Endothelial cell of umbilical vein (primary cell): ENCODE measurements at regions of chr4 and their contacts with region 1.

Region 1: GRCh38 chr4:11548597-11549082 is 119.9 kb upstream of the HS3ST1 start:
- DNase-seq: peak; percentile 73
- H3K4me3 ChIP-seq: no peak overlapping the region
- H3K27ac ChIP-seq: peak overlapping the region; percentile 87
- H3K4me1 ChIP-seq: peaks cover 58% of the 10 kb centered on the region
- H3K27me3 ChIP-seq: no peaks in the 10 kb centered on the region
- CTCF ChIP-seq: no peak
- POLR2A ChIP-seq: no peak

Region 2: GRCh38 chr4:10096201-10096977 is 1452.3 kb before region 1 on chr4:
- CTCF ChIA-PET with region 1: no interaction called
- POLR2A ChIA-PET with region 1: no interaction called
- dilution Hi-C with region 1: no loop called
- intact Hi-C with region 1: loop called (anchors 10 kb)
- DNase-seq: peak; percentile 71
- H3K4me3 ChIP-seq: no peak overlapping the region
- H3K27ac ChIP-seq: peak overlapping the region; percentile 79
- H3K4me1 ChIP-seq: peaks cover 82% of the 10 kb centered on the region
- H3K27me3 ChIP-seq: no peaks in the 10 kb centered on the region
- CTCF ChIP-seq: no peak
- POLR2A ChIP-seq: peak; percentile 45

Region 3: GRCh38 chr4:11471618-11472017 is 77.0 kb before region 1 on chr4:
- CTCF ChIA-PET with region 1: interaction called, 4 read pairs
- POLR2A ChIA-PET with region 1: no interaction called
- dilution Hi-C with region 1: no loop called
- intact Hi-C with region 1: loop called (anchors 1 kb)
- DNase-seq: peak; percentile 76
- H3K4me3 ChIP-seq: peak overlapping the region in 1 of 3 experiments; percentile 24
- H3K27ac ChIP-seq: peak overlapping the region; percentile 59
- H3K4me1 ChIP-seq: peaks cover 32% of the 10 kb centered on the region
- H3K27me3 ChIP-seq: no peaks in the 10 kb centered on the region
- CTCF ChIP-seq: no peak
- POLR2A ChIP-seq: no peak

Region 4: DNA sequence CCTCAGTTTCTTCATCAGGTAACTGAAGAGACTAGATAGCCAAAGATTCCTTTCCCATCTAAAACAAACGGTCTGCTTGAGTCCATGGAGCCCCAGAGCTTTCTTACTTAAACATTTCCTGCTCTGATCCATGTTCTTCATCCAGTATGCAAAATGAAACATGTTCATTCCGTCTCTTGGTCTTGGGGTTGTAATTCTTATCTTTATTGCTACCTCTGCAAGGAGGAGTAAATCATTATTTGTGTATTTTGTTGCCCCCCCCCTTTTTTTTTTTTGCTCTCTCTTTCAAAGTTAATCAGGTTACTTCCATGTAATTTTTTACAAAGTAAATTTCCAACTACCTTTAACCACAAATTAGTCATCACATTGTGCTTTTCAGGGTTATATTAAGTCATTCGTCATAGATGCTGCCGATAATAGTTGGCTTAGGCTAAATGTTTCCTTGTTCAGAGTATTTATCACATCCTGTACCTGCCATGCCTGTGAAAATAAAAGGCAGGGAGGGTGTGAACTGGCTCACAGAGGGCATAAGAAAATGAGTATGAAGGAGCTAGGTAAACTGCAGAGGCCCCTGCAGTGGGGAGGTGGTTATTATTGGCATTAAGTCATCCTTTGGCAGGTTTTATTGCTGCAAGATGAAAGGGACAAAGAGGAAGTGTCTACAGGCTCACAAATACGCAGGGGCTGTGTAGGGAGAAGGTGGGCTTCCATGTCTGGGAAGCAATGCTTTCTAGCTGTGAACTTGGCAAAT is 43.2 kb before region 1 on chr4:
- CTCF ChIA-PET with region 1: interaction called, 8 read pairs
- POLR2A ChIA-PET with region 1: no interaction called
- dilution Hi-C with region 1: no loop called
- intact Hi-C with region 1: loop called (anchors 1 kb)
- DNase-seq: peak; percentile 96
- H3K4me3 ChIP-seq: no peak overlapping the region
- H3K27ac ChIP-seq: peak overlapping the region; percentile 54
- H3K4me1 ChIP-seq: peaks cover 17% of the 10 kb centered on the region
- H3K27me3 ChIP-seq: no peaks in the 10 kb centered on the region
- CTCF ChIP-seq: no peak
- POLR2A ChIP-seq: no peak

Region 5: DNA sequence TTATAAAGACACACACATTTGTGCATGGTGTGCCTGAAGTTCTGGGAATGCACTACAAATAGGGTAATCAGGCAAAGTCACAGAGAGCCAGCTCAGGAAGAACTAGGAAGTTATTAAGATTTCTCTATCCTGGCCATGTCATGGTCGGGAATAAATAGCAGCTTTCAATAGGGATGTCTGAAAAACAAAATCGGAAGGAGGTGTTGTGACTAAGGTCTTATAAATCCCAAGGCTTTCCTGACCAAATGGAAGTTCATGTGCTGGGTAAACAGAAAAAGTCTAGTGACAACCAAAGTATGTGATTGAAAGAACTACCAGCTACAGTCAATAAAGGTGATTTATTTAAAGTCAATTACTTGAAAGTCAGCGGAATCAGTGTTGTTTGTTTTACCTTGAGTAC is 142.6 kb after region 1 on chr4:
- CTCF ChIA-PET with region 1: no interaction called
- POLR2A ChIA-PET with region 1: no interaction called
- dilution Hi-C with region 1: no loop called
- intact Hi-C with region 1: loop called (anchors 1 kb)
- DNase-seq: peak; percentile 61
- H3K4me3 ChIP-seq: no peak overlapping the region
- H3K27ac ChIP-seq: peak overlapping the region; percentile 55
- H3K4me1 ChIP-seq: peaks cover 22% of the 10 kb centered on the region
- H3K27me3 ChIP-seq: no peaks in the 10 kb centered on the region
- CTCF ChIP-seq: no peak
- POLR2A ChIP-seq: no peak

Region 6: GRCh38 chr4:11743236-11743635 is 194.6 kb after region 1 on chr4:
- CTCF ChIA-PET with region 1: interaction called, 5 read pairs
- POLR2A ChIA-PET with region 1: no interaction called
- dilution Hi-C with region 1: no loop called
- intact Hi-C with region 1: loop called (anchors 1 kb)
- DNase-seq: peak; percentile 82
- H3K4me3 ChIP-seq: peak overlapping the region in 1 of 3 experiments; percentile 56
- H3K27ac ChIP-seq: peak overlapping the region; percentile 82
- H3K4me1 ChIP-seq: peaks cover 77% of the 10 kb centered on the region
- H3K27me3 ChIP-seq: no peaks in the 10 kb centered on the region
- CTCF ChIP-seq: no peak
- POLR2A ChIP-seq: no peak

Region 7: DNA sequence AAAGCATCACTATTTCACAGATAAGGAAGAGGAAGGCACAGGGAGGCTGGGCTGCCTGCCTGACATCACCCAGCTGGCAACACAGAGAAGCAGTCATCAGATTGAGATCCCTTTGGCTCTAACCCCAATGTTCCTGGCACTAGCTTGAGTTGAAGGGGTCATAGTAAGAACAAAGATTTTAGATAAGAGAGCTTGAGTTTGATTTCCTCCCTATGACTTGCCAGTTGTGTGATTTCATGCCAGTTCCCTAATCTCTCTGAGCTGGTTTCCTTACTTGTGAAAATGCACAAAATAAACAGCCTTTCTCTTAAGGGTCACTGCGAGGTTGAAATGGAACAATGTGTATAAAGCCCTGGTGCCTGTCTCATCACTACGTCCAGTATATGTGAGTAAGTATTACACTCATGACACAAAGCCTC is 355.5 kb after region 1 on chr4:
- CTCF ChIA-PET with region 1: no interaction called
- POLR2A ChIA-PET with region 1: no interaction called
- dilution Hi-C with region 1: no loop called
- intact Hi-C with region 1: loop called (anchors 1 kb)
- DNase-seq: peak; percentile 100
- H3K4me3 ChIP-seq: no peak overlapping the region
- H3K27ac ChIP-seq: peak overlapping the region; percentile 100
- H3K4me1 ChIP-seq: peaks cover 26% of the 10 kb centered on the region
- H3K27me3 ChIP-seq: no peaks in the 10 kb centered on the region
- CTCF ChIP-seq: no peak
- POLR2A ChIP-seq: peak; percentile 33

Region 8: DNA sequence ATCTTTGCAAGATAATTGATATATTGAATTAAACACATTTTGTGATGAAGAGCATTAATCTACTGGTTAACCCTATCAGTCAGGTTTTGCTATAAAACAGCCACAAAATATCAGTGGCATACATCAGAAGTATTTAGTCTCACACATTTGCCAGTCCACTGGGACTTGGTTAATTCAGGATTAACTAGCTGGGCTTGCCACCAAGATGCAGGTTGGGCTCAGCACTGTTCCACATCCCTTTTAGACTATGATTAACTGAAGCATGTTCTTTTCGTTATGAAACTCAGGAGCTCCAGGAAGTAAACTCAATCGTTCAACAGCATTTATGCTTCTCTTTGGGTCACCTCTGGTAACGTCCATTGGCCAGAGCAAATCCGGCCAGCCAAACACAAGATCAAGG is 418.1 kb after region 1 on chr4:
- CTCF ChIA-PET with region 1: no interaction called
- POLR2A ChIA-PET with region 1: no interaction called
- dilution Hi-C with region 1: no loop called
- intact Hi-C with region 1: no loop called
- DNase-seq: no peak
- H3K4me3 ChIP-seq: no peak overlapping the region
- H3K27ac ChIP-seq: no peak overlapping the region
- H3K4me1 ChIP-seq: no peaks in the 10 kb centered on the region
- H3K27me3 ChIP-seq: no peaks in the 10 kb centered on the region
- CTCF ChIP-seq: no peak
- POLR2A ChIP-seq: no peak